ENCODE measurements at regions of chr13 and their contacts with region 1.

Region 1: GRCh38 chr13:36736119-36736726 is 62.4 kb downstream of the SERTM1 start:
- DNase-seq: no peak
- ATAC-seq: no peak
- H3K4me3 ChIP-seq: no peak overlapping the region
- H3K27ac ChIP-seq: no peak overlapping the region
- H3K4me1 ChIP-seq: no peaks in the 10 kb centered on the region
- H3K27me3 ChIP-seq: no peaks in the 10 kb centered on the region
- CTCF ChIP-seq: peak; percentile 48 to 62 (median 56)
- EP300 ChIP-seq: no peak
- POLR2A ChIP-seq: no peak
- RAD21 ChIP-seq: peak; percentile 56

Region 2: DNA sequence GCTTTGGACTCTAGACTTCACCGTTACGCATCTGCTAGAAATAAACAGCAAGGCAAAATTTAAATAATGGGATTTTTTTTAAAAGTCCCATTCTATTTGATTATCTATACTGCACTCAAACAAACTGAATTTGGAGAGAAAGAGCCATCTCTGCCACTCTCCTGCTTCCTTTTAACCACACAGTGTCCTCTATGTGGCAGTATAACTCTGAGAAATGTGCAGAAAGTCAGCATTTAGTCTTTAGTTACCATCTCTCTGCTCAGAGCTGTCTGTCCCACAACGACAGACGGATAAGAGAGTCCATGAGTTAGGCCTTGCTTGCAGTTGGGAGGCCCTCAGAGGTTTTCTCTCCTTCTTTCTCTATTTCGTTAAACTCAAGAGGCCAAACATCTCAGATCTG is 282.7 kb before region 1 on chr13:
- CTCF ChIA-PET with region 1: interaction called, 23 read pairs
- POLR2A ChIA-PET with region 1: no interaction called
- RAD21 ChIA-PET with region 1: interaction called, 6 read pairs
- SMC1A ChIA-PET with region 1: interaction called, 20 read pairs
- in situ Hi-C with region 1: no loop called
- intact Hi-C with region 1: no loop called
- DNase-seq: no peak
- ATAC-seq: peak; percentile 61
- H3K4me3 ChIP-seq: no peak overlapping the region
- H3K27ac ChIP-seq: no peak overlapping the region
- H3K4me1 ChIP-seq: no peaks in the 10 kb centered on the region
- H3K27me3 ChIP-seq: no peaks in the 10 kb centered on the region
- CTCF ChIP-seq: peak in 2 of 3 experiments; percentile 14 to 39; a peak in 2 of 6 replicates
- EP300 ChIP-seq: no peak
- POLR2A ChIP-seq: no peak
- RAD21 ChIP-seq: peak; percentile 36

Region 3: DNA sequence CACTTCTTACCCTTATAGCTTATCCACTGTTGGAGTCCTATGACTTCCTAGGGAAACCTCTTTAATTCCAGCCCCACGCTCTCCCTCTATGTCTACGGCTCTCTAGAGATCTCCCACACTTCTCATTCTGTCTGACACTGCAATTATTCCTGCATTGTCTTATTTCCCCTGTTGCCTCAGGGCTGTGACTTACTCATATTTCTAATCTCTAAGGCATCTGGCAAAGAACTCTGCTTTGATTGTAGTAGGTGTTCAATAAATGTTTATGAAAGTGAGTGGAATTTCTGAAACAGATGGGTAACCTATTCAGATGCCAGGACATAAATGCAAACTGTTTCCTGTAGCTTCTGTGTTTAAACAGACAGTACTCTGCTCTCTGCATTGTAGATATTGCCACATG is 164.8 kb before region 1 on chr13:
- CTCF ChIA-PET with region 1: no interaction called
- POLR2A ChIA-PET with region 1: no interaction called
- RAD21 ChIA-PET with region 1: no interaction called
- SMC1A ChIA-PET with region 1: no interaction called
- in situ Hi-C with region 1: no loop called
- intact Hi-C with region 1: no loop called
- DNase-seq: no peak
- ATAC-seq: no peak
- H3K4me3 ChIP-seq: no peak overlapping the region
- H3K27ac ChIP-seq: no peak overlapping the region
- H3K4me1 ChIP-seq: no peaks in the 10 kb centered on the region
- H3K27me3 ChIP-seq: no peaks in the 10 kb centered on the region
- CTCF ChIP-seq: no peak
- EP300 ChIP-seq: no peak
- POLR2A ChIP-seq: no peak
- RAD21 ChIP-seq: no peak

Region 4: GRCh38 chr13:36666477-36667229 is 69.6 kb before region 1 on chr13:
- CTCF ChIA-PET with region 1: no interaction called
- POLR2A ChIA-PET with region 1: no interaction called
- RAD21 ChIA-PET with region 1: no interaction called
- SMC1A ChIA-PET with region 1: no interaction called
- in situ Hi-C with region 1: no loop called
- intact Hi-C with region 1: no loop called
- DNase-seq: no peak
- ATAC-seq: no peak
- H3K4me3 ChIP-seq: no peak overlapping the region
- H3K27ac ChIP-seq: no peak overlapping the region
- H3K4me1 ChIP-seq: no peaks in the 10 kb centered on the region
- H3K27me3 ChIP-seq: no peaks in the 10 kb centered on the region
- CTCF ChIP-seq: no peak
- EP300 ChIP-seq: no peak
- POLR2A ChIP-seq: no peak
- RAD21 ChIP-seq: no peak

Region 5: DNA sequence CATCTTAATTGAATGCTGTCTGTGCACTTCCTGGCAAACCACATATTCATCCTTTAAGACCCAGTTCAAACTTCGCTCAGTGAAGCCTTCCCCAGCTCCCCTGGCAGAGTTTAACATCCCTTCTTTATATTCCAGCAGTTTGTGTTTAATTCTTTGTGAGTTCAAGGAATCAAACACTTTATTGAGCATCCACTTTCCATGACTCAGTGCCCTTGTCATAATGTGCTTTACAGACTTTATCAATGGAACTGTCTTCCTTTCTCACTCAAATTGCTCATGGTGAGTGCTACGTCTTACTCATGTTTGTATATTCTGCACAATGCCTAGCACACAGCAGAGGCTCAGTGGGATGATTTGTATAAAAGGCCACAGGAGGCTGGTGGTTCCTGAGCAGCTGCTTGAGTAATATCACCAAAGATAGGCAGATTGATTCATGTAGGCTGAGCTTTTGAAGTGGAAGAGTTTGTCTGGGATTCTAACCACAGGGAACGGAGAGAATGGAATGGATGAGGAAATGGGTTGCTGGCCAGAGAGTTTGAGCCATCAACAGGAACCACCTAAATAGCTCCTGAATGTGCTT is 18.2 kb before region 1 on chr13:
- CTCF ChIA-PET with region 1: interaction called, 10 read pairs
- POLR2A ChIA-PET with region 1: no interaction called
- RAD21 ChIA-PET with region 1: no interaction called
- SMC1A ChIA-PET with region 1: interaction called, 5 read pairs
- in situ Hi-C with region 1: no loop called
- intact Hi-C with region 1: no loop called
- DNase-seq: no peak
- ATAC-seq: no peak
- H3K4me3 ChIP-seq: no peak overlapping the region
- H3K27ac ChIP-seq: no peak overlapping the region
- H3K4me1 ChIP-seq: no peaks in the 10 kb centered on the region
- H3K27me3 ChIP-seq: no peaks in the 10 kb centered on the region
- CTCF ChIP-seq: no peak
- EP300 ChIP-seq: no peak
- POLR2A ChIP-seq: no peak
- RAD21 ChIP-seq: no peak

Region 6: DNA sequence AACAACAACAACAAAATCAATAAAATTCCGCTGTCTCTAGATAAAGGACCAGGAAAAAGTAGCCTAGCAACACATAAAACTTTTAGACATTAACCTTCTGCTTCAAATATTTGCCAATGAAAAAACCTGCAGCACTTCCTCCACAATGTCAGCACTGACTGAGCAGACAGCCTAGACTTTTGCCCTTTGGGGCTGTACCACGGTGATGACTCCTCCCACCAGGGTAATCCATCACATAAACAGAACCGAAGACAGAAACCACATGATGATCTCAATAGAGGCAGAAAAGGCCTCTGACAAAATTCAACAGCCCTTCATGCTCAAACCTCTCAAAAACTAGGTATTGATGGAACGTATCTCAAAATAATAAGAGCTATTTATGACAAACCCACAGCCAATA is 1163.5 kb after region 1 on chr13:
- CTCF ChIA-PET with region 1: no interaction called
- POLR2A ChIA-PET with region 1: no interaction called
- RAD21 ChIA-PET with region 1: no interaction called
- SMC1A ChIA-PET with region 1: no interaction called
- in situ Hi-C with region 1: no loop called
- intact Hi-C with region 1: no loop called
- DNase-seq: no peak
- ATAC-seq: no peak
- H3K4me3 ChIP-seq: no peak overlapping the region
- H3K27ac ChIP-seq: no peak overlapping the region
- H3K4me1 ChIP-seq: no peaks in the 10 kb centered on the region
- H3K27me3 ChIP-seq: no peaks in the 10 kb centered on the region
- CTCF ChIP-seq: no peak
- EP300 ChIP-seq: no peak
- POLR2A ChIP-seq: no peak
- RAD21 ChIP-seq: no peak